ENCODE measurements at regions of chr7 and their contacts with region 1.

Region 1: GRCh38 chr7:134547397-134548054 is 1.4 kb upstream of the AKR1B15 start:
- DNase-seq: peak; percentile 56 to 64
- H3K4me3 ChIP-seq: peak overlapping the region; percentile 14 to 23
- H3K27ac ChIP-seq: peak overlapping the region in 1 of 2 donors; percentile 41
- H3K4me1 ChIP-seq: no peaks in the 10 kb centered on the region
- H3K27me3 ChIP-seq: no peaks in the 10 kb centered on the region
- CTCF ChIP-seq: peak; percentile 58 to 72 (median 66)
- POLR2A ChIP-seq: no peak

Region 2: DNA sequence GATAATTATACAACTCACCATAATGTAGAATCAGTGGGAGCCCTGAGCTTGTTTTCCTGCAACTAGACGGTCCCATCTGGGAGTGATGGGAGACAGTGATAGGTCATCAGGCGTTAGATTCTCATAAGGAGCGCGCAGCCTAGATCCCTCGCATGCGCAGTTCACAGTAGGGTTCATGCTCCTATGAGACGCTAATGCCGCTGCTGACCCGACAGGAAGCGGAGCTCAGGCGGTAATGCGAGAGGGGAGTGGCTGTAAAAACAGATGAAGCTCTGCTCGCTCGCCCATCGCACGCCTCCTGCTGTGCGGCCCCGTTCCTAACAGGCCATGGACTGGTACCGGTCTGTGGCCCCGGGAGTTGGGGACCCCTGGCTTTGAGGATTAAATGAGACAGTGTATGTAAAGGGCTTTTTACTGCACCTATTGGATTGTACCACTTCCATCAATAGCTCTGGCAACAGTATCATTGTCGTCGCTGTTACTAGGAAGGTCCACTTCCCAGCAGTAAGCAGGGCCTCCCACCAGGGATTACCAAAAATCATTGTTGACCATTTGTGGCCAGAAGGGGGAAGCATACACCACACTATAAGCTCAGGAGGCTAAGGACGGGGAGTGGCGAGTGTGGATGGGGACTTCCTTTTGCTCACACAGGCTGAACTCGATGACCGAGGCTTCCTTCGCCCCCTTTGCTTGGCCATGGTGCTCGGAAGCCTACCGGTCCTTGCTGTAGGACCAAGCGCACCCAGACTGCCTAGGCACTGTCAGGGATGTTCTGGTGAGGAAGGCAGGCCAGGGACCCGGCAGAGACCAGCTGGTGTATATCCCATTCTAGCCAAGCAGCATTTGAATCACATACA is 115.0 kb before region 1 on chr7:
- intact Hi-C with region 1: loop called (anchors 10 kb)
- DNase-seq: peak; percentile 81 to 87
- H3K4me3 ChIP-seq: peak overlapping the region; percentile 15 to 31
- H3K27ac ChIP-seq: peak overlapping the region; percentile 77 to 81
- H3K4me1 ChIP-seq: no peaks in the 10 kb centered on the region
- H3K27me3 ChIP-seq: no peaks in the 10 kb centered on the region
- CTCF ChIP-seq: peak; percentile 73 to 88 (median 78)
- POLR2A ChIP-seq: peak in 1 of 2 donors; percentile 39

Region 3: GRCh38 chr7:134686786-134687185 is 139.3 kb after region 1 on chr7:
- intact Hi-C with region 1: no loop called
- DNase-seq: no peak
- H3K4me3 ChIP-seq: no peak overlapping the region
- H3K27ac ChIP-seq: no peak overlapping the region
- H3K4me1 ChIP-seq: peaks cover 6 to 7% of the 10 kb centered on the region in 2 donors
- H3K27me3 ChIP-seq: no peaks in the 10 kb centered on the region
- CTCF ChIP-seq: peak; percentile 53 to 57 (median 56)
- POLR2A ChIP-seq: no peak

Measured in uterus (tissue), 4 donors.